IMR-90 (cell line): ENCODE measurements at regions of chr5 and their contacts with region 1.

Region 1: GRCh38 chr5:112921833-112922817 is at the start of gene REEP5:
- DNase-seq: peak; percentile 69
- ATAC-seq: peak; percentile 87
- H3K4me3 ChIP-seq: peak within 1 kb of the TSS; percentile 92
- H3K27ac ChIP-seq: peak within 1 kb of the TSS; percentile 97
- H3K4me1 ChIP-seq: peaks cover 9% of the 10 kb centered on the region
- H3K27me3 ChIP-seq: peaks cover 2% of the 10 kb centered on the region; the same call in 1 of the 2 replicates
- CTCF ChIP-seq: peak; percentile 82
- POLR2A ChIP-seq: peak; percentile 79
- RAD21 ChIP-seq: peak; percentile 59
- total RNA-seq, gene REEP5: 49.3 and 70.3 TPM in 2 replicates

Region 2: DNA sequence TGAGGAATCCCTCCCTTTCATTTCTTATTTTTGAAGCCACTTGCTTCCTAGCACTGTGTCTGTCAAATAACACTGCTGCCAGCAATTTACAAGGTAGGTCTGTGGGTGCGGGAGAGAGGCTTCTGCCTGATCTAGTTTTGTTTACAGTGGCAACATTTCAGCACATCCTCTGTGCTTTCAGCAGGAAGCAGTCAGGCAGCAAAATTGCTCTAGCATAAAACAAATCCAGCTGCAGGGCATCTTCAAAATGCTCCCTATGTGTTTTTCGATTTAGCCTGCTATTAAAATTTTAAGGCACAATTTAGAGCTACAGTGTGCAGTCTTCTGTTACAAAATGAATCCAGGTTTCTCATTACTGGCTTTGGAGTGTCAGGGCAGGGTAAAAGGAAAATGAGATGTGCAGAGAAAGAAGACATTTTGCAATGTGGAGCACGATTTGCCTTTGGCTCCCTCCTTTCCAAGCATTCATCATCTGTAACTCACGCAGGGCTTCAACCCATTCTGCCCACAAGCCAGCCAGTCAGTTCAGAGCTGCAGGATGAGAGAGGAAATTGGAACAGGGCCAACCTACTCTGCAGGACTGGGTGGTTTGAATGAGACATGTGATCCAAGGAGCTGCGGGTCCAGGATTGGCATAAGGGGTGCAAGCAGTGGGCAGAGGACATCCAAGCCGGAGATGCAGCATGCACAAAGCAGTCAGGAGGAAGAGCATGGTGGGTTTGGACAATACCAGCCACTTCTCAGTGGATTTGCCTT is 327.9 kb before region 1 on chr5:
- CTCF ChIA-PET with region 1: no interaction called
- POLR2A ChIA-PET with region 1: no interaction called
- dilution Hi-C with region 1: no loop called
- in situ Hi-C with region 1: no loop called
- intact Hi-C with region 1: no loop called
- DNase-seq: no peak
- ATAC-seq: no peak
- H3K4me3 ChIP-seq: no peak overlapping the region
- H3K27ac ChIP-seq: no peak overlapping the region
- H3K4me1 ChIP-seq: no peaks in the 10 kb centered on the region
- H3K27me3 ChIP-seq: no peaks in the 10 kb centered on the region; the same call in none of the 2 replicates
- CTCF ChIP-seq: no peak
- POLR2A ChIP-seq: no peak
- RAD21 ChIP-seq: no peak

Region 3: DNA sequence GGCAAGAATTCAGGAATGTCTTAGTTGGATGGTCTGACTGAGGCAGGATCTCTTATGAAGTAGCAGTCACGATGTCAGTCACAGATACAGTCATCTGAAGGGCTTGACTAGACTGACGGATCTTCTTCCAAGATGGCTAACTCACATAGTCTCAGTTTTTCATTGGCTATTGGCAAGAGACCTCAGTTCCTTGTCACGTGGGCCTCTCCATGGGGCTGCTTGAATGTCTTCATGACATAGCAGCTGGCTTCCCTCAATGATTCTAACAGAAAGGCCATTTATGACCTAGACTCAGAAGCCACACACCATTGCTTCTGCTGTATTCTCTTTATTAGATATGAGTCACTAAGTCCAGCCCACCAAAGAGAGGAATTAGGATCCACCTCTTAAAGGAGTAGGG is 179.7 kb before region 1 on chr5:
- CTCF ChIA-PET with region 1: no interaction called
- POLR2A ChIA-PET with region 1: no interaction called
- dilution Hi-C with region 1: no loop called
- in situ Hi-C with region 1: no loop called
- intact Hi-C with region 1: no loop called
- DNase-seq: no peak
- ATAC-seq: no peak
- H3K4me3 ChIP-seq: no peak overlapping the region
- H3K27ac ChIP-seq: no peak overlapping the region
- H3K4me1 ChIP-seq: peaks cover 8% of the 10 kb centered on the region
- H3K27me3 ChIP-seq: no peaks in the 10 kb centered on the region
- CTCF ChIP-seq: no peak
- POLR2A ChIP-seq: no peak
- RAD21 ChIP-seq: no peak

Region 4: GRCh38 chr5:112933651-112934365 is 11.7 kb after region 1 on chr5:
- CTCF ChIA-PET with region 1: interaction called, 4 read pairs
- POLR2A ChIA-PET with region 1: no interaction called
- dilution Hi-C with region 1: no loop called
- in situ Hi-C with region 1: no loop called
- intact Hi-C with region 1: loop called (anchors 1 kb)
- DNase-seq: peak; percentile 88
- ATAC-seq: peak; percentile 87
- H3K4me3 ChIP-seq: no peak overlapping the region
- H3K27ac ChIP-seq: no peak overlapping the region; the same call in 1 of the 2 replicates
- H3K4me1 ChIP-seq: peaks cover 8% of the 10 kb centered on the region
- H3K27me3 ChIP-seq: no peaks in the 10 kb centered on the region
- CTCF ChIP-seq: no peak
- POLR2A ChIP-seq: no peak
- RAD21 ChIP-seq: no peak

Region 5: GRCh38 chr5:112976432-112977309 is 54.5 kb after region 1 on chr5 and contains the start of gene DCP2:
- CTCF ChIA-PET with region 1: no interaction called
- POLR2A ChIA-PET with region 1: no interaction called
- dilution Hi-C with region 1: no loop called
- in situ Hi-C with region 1: no loop called
- intact Hi-C with region 1: loop called (anchors 1 kb)
- DNase-seq: peak; percentile 100
- ATAC-seq: peak; percentile 98
- H3K4me3 ChIP-seq: peak within 1 kb of the TSS; percentile 66
- H3K27ac ChIP-seq: peak within 1 kb of the TSS; percentile 78
- H3K4me1 ChIP-seq: peaks cover 2% of the 10 kb centered on the region; the same call in 1 of the 2 replicates
- H3K27me3 ChIP-seq: no peaks in the 10 kb centered on the region
- CTCF ChIP-seq: no peak
- POLR2A ChIP-seq: peak; percentile 82
- RAD21 ChIP-seq: no peak
- total RNA-seq, gene DCP2: 18.6 and 30.6 TPM in 2 replicates